ENCODE measurements at regions of chr1 and their contacts with region 1.

Region 1: GRCh38 chr1:216221260-216221700 is 202.0 kb downstream of the USH2A start:
- DNase-seq: peak; percentile 19 to 55
- H3K4me3 ChIP-seq: peak overlapping the region; percentile 59
- H3K27ac ChIP-seq: no peak overlapping the region
- H3K4me1 ChIP-seq: no peaks in the 10 kb centered on the region
- H3K27me3 ChIP-seq: no peaks in the 10 kb centered on the region
- CTCF ChIP-seq: peak; percentile 71

Region 2: GRCh38 chr1:214248311-214249085 is 1972.8 kb before region 1 on chr1:
- CTCF ChIA-PET with region 1: interaction called, 12 read pairs
- POLR2A ChIA-PET with region 1: no interaction called
- intact Hi-C with region 1: no loop called
- DNase-seq: no peak
- H3K4me3 ChIP-seq: no peak overlapping the region
- H3K27ac ChIP-seq: no peak overlapping the region
- H3K4me1 ChIP-seq: no peaks in the 10 kb centered on the region
- H3K27me3 ChIP-seq: no peaks in the 10 kb centered on the region
- CTCF ChIP-seq: no peak

Region 3: GRCh38 chr1:214427871-214428277 is 1793.4 kb before region 1 on chr1:
- CTCF ChIA-PET with region 1: no interaction called
- POLR2A ChIA-PET with region 1: no interaction called
- intact Hi-C with region 1: no loop called
- DNase-seq: peak; percentile 40 to 58
- H3K4me3 ChIP-seq: no peak overlapping the region
- H3K27ac ChIP-seq: peak overlapping the region; percentile 13; the same call in 1 of the 2 replicates
- H3K4me1 ChIP-seq: peaks cover 11% of the 10 kb centered on the region
- H3K27me3 ChIP-seq: no peaks in the 10 kb centered on the region
- CTCF ChIP-seq: no peak

Region 4: GRCh38 chr1:216596281-216596862 is 375.1 kb after region 1 on chr1:
- CTCF ChIA-PET with region 1: no interaction called
- POLR2A ChIA-PET with region 1: no interaction called
- intact Hi-C with region 1: no loop called
- DNase-seq: no peak
- H3K4me3 ChIP-seq: no peak overlapping the region
- H3K27ac ChIP-seq: no peak overlapping the region
- H3K4me1 ChIP-seq: no peaks in the 10 kb centered on the region; the same call in 1 of the 2 replicates
- H3K27me3 ChIP-seq: no peaks in the 10 kb centered on the region
- CTCF ChIP-seq: no peak